ENCODE measurements at regions of chr6 and their contacts with region 1.

Region 1: GRCh38 chr6:108541838-108542759 is 18.6 kb upstream of the FOXO3 start:
- DNase-seq: peak; percentile 81
- ATAC-seq: peak; percentile 79
- H3K4me3 Mint-ChIP-seq: no peak overlapping the region
- H3K27ac Mint-ChIP-seq: no peak overlapping the region
- H3K4me1 Mint-ChIP-seq: peaks cover 7% of the 10 kb centered on the region
- H3K27me3 Mint-ChIP-seq: no peaks in the 10 kb centered on the region

Region 2: GRCh38 chr6:108186226-108186625 is 355.9 kb before region 1 on chr6:
- CTCF ChIA-PET with region 1: no interaction called
- POLR2A ChIA-PET with region 1: no interaction called
- intact Hi-C with region 1: no loop called
- DNase-seq: no peak
- ATAC-seq: no peak
- H3K4me3 Mint-ChIP-seq: no peak overlapping the region
- H3K27ac Mint-ChIP-seq: no peak overlapping the region
- H3K4me1 Mint-ChIP-seq: no peaks in the 10 kb centered on the region
- H3K27me3 Mint-ChIP-seq: peaks cover 36% of the 10 kb centered on the region

Region 3: GRCh38 chr6:108260809-108261569 is 281.1 kb before region 1 on chr6 and contains the start of gene SNX3:
- CTCF ChIA-PET with region 1: no interaction called
- POLR2A ChIA-PET with region 1: no interaction called
- intact Hi-C with region 1: no loop called
- DNase-seq: peak; percentile 94
- ATAC-seq: peak; percentile 93
- H3K4me3 Mint-ChIP-seq: peak within 1 kb of the TSS; percentile 80
- H3K27ac Mint-ChIP-seq: peak within 1 kb of the TSS; percentile 89
- H3K4me1 Mint-ChIP-seq: peaks cover 23% of the 10 kb centered on the region
- H3K27me3 Mint-ChIP-seq: no peaks in the 10 kb centered on the region
- total RNA-seq, gene SNX3: 77.1 to 112 TPM

Region 4: GRCh38 chr6:108798670-108799353 is 256.7 kb after region 1 on chr6:
- CTCF ChIA-PET with region 1: interaction called, 18 read pairs
- POLR2A ChIA-PET with region 1: no interaction called
- intact Hi-C with region 1: no loop called
- DNase-seq: peak; percentile 80
- ATAC-seq: peak; percentile 98
- H3K4me3 Mint-ChIP-seq: peak overlapping the region; percentile 45
- H3K27ac Mint-ChIP-seq: peak overlapping the region; percentile 86
- H3K4me1 Mint-ChIP-seq: peaks cover 18% of the 10 kb centered on the region
- H3K27me3 Mint-ChIP-seq: peaks cover 3% of the 10 kb centered on the region

Region 5: GRCh38 chr6:108835218-108835850 is 293.2 kb after region 1 on chr6:
- CTCF ChIA-PET with region 1: interaction called, 34 read pairs
- POLR2A ChIA-PET with region 1: no interaction called
- intact Hi-C with region 1: loop called (anchors 1 kb)
- DNase-seq: peak; percentile 93
- ATAC-seq: peak; percentile 96
- H3K4me3 Mint-ChIP-seq: no peak overlapping the region
- H3K27ac Mint-ChIP-seq: no peak overlapping the region
- H3K4me1 Mint-ChIP-seq: peaks cover 20% of the 10 kb centered on the region
- H3K27me3 Mint-ChIP-seq: no peaks in the 10 kb centered on the region

Region 6: GRCh38 chr6:108896111-108896661 is 354.1 kb after region 1 on chr6:
- CTCF ChIA-PET with region 1: interaction called, 17 read pairs
- POLR2A ChIA-PET with region 1: no interaction called
- intact Hi-C with region 1: loop called (anchors 1 kb)
- DNase-seq: no peak
- ATAC-seq: peak; percentile 42
- H3K4me3 Mint-ChIP-seq: no peak overlapping the region
- H3K27ac Mint-ChIP-seq: no peak overlapping the region
- H3K4me1 Mint-ChIP-seq: peaks cover 13% of the 10 kb centered on the region
- H3K27me3 Mint-ChIP-seq: no peaks in the 10 kb centered on the region